ENCODE measurements at regions of chr9 and their contacts with region 1.

Region 1: GRCh38 chr9:35903049-35903448 is 3.0 kb upstream of the HRCT1 start:
- DNase-seq: peak in 1 of 2 experiments; percentile 54
- H3K4me3 ChIP-seq: no peak overlapping the region
- H3K27ac ChIP-seq: no peak overlapping the region
- H3K4me1 ChIP-seq: peaks cover 38% of the 10 kb centered on the region
- H3K27me3 ChIP-seq: no peaks in the 10 kb centered on the region
- CTCF ChIP-seq: peak; percentile 78

Region 2: DNA sequence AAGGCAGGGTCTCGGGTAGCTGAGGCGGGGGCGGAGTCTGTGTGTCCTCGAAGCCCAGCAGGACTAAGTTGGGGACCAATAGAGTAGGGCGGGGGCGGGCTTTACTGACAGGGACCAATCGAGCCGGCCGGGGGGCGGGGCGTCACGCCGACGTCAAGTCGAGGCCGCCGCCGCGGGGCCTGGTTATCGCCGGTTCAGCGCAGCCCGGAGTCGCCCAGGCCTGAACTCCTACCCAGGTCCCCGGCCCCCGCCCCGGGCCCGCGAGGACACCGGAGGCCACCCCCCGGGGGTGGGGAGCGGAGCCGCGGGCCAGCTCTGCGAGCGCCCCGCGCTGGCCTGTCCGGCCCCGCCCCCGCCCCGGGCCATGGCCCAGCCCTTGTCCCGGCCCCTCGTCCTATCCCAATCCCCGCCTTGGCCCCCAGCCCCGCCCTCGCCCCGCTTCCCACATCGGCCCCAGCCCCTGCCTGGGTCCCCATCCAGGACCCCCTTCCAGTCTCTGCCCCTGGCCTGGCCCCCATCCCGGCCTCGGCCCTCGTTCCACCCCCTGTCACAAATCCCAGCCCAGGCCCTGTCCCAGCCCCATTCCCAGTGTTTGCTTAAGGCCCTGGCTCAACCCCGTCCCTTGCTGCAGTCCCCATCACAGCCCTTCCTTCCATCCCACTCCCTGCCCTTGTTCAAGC is 73.8 kb before region 1 on chr9 and contains the start of gene TMEM8B:
- CTCF ChIA-PET with region 1: no interaction called
- POLR2A ChIA-PET with region 1: no interaction called
- intact Hi-C with region 1: loop called (anchors 2 kb)
- DNase-seq: peak; percentile 63 to 78
- H3K4me3 ChIP-seq: peak within 1 kb of the TSS; percentile 71; the same call in 1 of the 2 replicates
- H3K27ac ChIP-seq: no peak within 1 kb of the TSS
- H3K4me1 ChIP-seq: peaks cover 12% of the 10 kb centered on the region
- H3K27me3 ChIP-seq: no peaks in the 10 kb centered on the region
- CTCF ChIP-seq: no peak
- total RNA-seq, gene TMEM8B: 6.3 and 6.4 TPM in 2 replicates

Region 3: GRCh38 chr9:35981699-35982098 is 78.7 kb after region 1 on chr9:
- CTCF ChIA-PET with region 1: no interaction called
- POLR2A ChIA-PET with region 1: no interaction called
- intact Hi-C with region 1: no loop called
- DNase-seq: no peak
- H3K4me3 ChIP-seq: no peak overlapping the region
- H3K27ac ChIP-seq: no peak overlapping the region
- H3K4me1 ChIP-seq: no peaks in the 10 kb centered on the region
- H3K27me3 ChIP-seq: no peaks in the 10 kb centered on the region
- CTCF ChIP-seq: no peak

Region 4: GRCh38 chr9:36250079-36250478 is 347.0 kb after region 1 on chr9:
- CTCF ChIA-PET with region 1: no interaction called
- POLR2A ChIA-PET with region 1: no interaction called
- intact Hi-C with region 1: no loop called
- DNase-seq: peak in 1 of 2 experiments; percentile 38
- H3K4me3 ChIP-seq: no peak overlapping the region
- H3K27ac ChIP-seq: no peak overlapping the region
- H3K4me1 ChIP-seq: 0 out of 2 replicates have a peak, but pooled peaks cover 6% of the 10 kb centered on the region
- H3K27me3 ChIP-seq: no peaks in the 10 kb centered on the region
- CTCF ChIP-seq: no peak

Region 5: GRCh38 chr9:36298586-36298985 is 395.5 kb after region 1 on chr9:
- CTCF ChIA-PET with region 1: no interaction called
- POLR2A ChIA-PET with region 1: no interaction called
- intact Hi-C with region 1: no loop called
- DNase-seq: no peak
- H3K4me3 ChIP-seq: no peak overlapping the region
- H3K27ac ChIP-seq: peak overlapping the region; percentile 97
- H3K4me1 ChIP-seq: peaks cover 52% of the 10 kb centered on the region
- H3K27me3 ChIP-seq: no peaks in the 10 kb centered on the region
- CTCF ChIP-seq: no peak